ENCODE measurements at regions of chr18 and their contacts with region 1.

Region 1: GRCh38 chr18:48680339-48681221 is 141.7 kb downstream of the CTIF start:
- DNase-seq: no peak
- H3K4me3 ChIP-seq: no peak overlapping the region
- H3K27ac ChIP-seq: peak overlapping the region; percentile 56 to 71 (median 58)
- H3K4me1 ChIP-seq: peaks cover 50 to 60% (median 57%) of the 10 kb centered on the region in 4 donors
- H3K27me3 ChIP-seq: no peaks in the 10 kb centered on the region
- CTCF ChIP-seq: no peak
- EP300 ChIP-seq: no peak
- POLR2A ChIP-seq: no peak

Region 2: GRCh38 chr18:48622911-48623431 is 57.6 kb before region 1 on chr18:
- intact Hi-C with region 1: no loop called
- DNase-seq: no peak
- H3K4me3 ChIP-seq: no peak overlapping the region
- H3K27ac ChIP-seq: peak overlapping the region; percentile 68 to 87 (median 84)
- H3K4me1 ChIP-seq: peaks cover 17 to 52% (median 46%) of the 10 kb centered on the region in 4 donors
- H3K27me3 ChIP-seq: no peaks in the 10 kb centered on the region
- CTCF ChIP-seq: no peak
- EP300 ChIP-seq: no peak
- POLR2A ChIP-seq: no peak

Region 3: GRCh38 chr18:48767090-48767690 is 86.6 kb after region 1 on chr18:
- intact Hi-C with region 1: loop called (anchors 10 kb)
- DNase-seq: no peak
- H3K4me3 ChIP-seq: no peak overlapping the region
- H3K27ac ChIP-seq: peak overlapping the region; percentile 77 to 86 (median 84)
- H3K4me1 ChIP-seq: peaks cover 77 to 94% (median 91%) of the 10 kb centered on the region in 4 donors
- H3K27me3 ChIP-seq: no peaks in the 10 kb centered on the region
- CTCF ChIP-seq: no peak
- EP300 ChIP-seq: no peak
- POLR2A ChIP-seq: no peak